ENCODE measurements at regions of chr10 and their contacts with region 1.

Region 1: DNA sequence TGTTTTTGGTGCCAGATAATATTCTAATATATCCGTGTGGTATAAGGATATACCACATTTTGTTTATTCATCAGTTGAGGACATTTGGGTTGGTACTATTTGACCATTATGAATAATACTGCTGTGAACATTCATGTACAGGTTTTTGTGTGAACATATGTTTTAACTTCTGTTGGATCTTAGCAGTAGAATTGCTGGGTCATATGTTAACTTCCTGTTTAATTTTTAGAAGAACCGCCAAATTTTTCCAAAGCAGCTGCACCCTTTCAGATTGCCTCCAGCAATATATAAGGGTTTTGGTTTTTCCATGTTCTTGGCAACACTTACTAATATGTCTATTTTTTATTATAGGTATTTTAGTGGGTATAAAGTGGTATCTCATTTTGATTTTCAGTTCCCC is 22.8 kb downstream of the VPS26A start:
- H3K4me3 Mint-ChIP-seq: no peak overlapping the region
- H3K27ac Mint-ChIP-seq: peak overlapping the region; percentile 40
- H3K4me1 Mint-ChIP-seq: peaks cover 18% of the 10 kb centered on the region
- H3K27me3 Mint-ChIP-seq: no peaks in the 10 kb centered on the region

Region 2: GRCh38 chr10:69202332-69202731 is 55.6 kb after region 1 on chr10:
- intact Hi-C with region 1: loop called (anchors 10 kb)
- H3K4me3 Mint-ChIP-seq: no peak overlapping the region
- H3K27ac Mint-ChIP-seq: no peak overlapping the region
- H3K4me1 Mint-ChIP-seq: no peaks in the 10 kb centered on the region
- H3K27me3 Mint-ChIP-seq: no peaks in the 10 kb centered on the region